Lower leg skin (tissue), 4 donors: ENCODE measurements at regions of chr16 and their contacts with region 1.

Region 1: GRCh38 chr16:6032438-6032837 is 934.8 kb upstream of the EEF2KMT start:
- DNase-seq: no peak
- H3K4me3 ChIP-seq: no peak overlapping the region
- CTCF ChIP-seq: no peak
- POLR2A ChIP-seq: no peak

Region 2: GRCh38 chr16:4053301-4053845 is 1979.1 kb before region 1 on chr16:
- intact Hi-C with region 1: no loop called
- DNase-seq: peak; percentile 82 to 96
- H3K4me3 ChIP-seq: no peak overlapping the region
- CTCF ChIP-seq: no peak
- POLR2A ChIP-seq: no peak

Region 3: DNA sequence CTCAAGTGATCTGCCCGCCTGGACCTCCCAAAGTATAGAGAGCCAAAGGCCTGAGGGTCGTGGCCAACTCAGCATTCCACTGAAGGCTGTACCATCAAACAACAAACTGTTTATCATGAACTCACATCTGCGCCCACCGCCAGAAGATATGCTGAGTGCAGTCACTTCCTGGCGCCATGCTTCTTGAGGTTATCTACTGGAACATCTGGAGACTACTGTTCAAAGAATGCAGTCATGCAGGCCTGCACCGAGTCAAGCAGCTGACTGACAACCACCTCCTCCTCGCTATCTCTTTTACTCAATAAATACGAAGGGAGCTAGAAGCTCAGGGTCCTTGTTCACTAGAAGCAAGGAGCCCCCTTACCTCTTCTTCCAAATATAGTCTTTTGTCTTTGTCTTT is 461.0 kb before region 1 on chr16:
- intact Hi-C with region 1: no loop called
- DNase-seq: no peak
- H3K4me3 ChIP-seq: no peak overlapping the region
- CTCF ChIP-seq: no peak
- POLR2A ChIP-seq: no peak

Region 4: DNA sequence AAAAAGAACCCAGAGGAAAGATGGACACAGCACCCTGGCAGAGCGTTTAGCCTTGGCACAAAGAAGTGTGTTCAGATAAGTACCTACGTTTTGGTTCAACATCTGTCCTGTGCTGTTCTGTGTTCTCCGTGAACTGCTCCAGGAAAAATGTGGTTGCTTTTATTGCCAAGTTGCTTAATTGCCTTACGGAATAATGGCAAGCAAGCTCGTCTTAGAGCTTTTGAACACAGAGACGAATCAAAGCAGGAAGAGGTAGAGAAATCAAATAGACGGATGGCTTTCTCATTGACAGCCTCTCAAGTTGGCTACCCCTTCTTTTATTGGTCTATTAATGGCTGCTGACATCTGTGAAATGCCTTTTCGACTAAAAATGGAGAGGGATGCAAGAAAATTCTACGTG is 23.8 kb before region 1 on chr16:
- intact Hi-C with region 1: loop called (anchors 1 kb)
- DNase-seq: no peak
- H3K4me3 ChIP-seq: no peak overlapping the region
- CTCF ChIP-seq: no peak
- POLR2A ChIP-seq: no peak